Calu3 (cell line): ENCODE measurements at regions of chrX and their contacts with region 1.

Region 1: DNA sequence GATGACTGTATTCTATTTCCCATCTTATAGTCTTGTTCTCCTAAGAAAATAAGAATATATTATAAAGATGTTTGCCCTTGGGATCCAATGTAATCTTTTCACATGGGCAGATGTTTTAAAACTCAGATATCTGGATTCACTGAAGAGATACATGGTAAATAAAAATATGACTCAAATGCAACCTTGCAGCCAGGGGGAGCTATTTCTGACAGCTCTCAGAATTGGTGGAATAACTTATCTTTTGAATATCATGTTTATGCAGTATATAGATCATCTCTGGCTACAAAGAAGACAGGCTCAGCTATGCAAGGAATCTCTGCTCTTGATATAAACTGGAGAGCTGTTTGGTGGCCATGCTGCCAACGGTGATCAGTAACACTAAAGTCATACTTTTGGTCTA is 274.7 kb downstream of the GLUD2 start:
- DNase-seq: peak; percentile 17
- H3K4me3 Mint-ChIP-seq: no peak overlapping the region
- H3K27ac Mint-ChIP-seq: no peak overlapping the region
- H3K4me1 Mint-ChIP-seq: no peaks in the 10 kb centered on the region
- H3K27me3 Mint-ChIP-seq: no peaks in the 10 kb centered on the region
- CTCF ChIP-seq: peak; percentile 16

Region 2: DNA sequence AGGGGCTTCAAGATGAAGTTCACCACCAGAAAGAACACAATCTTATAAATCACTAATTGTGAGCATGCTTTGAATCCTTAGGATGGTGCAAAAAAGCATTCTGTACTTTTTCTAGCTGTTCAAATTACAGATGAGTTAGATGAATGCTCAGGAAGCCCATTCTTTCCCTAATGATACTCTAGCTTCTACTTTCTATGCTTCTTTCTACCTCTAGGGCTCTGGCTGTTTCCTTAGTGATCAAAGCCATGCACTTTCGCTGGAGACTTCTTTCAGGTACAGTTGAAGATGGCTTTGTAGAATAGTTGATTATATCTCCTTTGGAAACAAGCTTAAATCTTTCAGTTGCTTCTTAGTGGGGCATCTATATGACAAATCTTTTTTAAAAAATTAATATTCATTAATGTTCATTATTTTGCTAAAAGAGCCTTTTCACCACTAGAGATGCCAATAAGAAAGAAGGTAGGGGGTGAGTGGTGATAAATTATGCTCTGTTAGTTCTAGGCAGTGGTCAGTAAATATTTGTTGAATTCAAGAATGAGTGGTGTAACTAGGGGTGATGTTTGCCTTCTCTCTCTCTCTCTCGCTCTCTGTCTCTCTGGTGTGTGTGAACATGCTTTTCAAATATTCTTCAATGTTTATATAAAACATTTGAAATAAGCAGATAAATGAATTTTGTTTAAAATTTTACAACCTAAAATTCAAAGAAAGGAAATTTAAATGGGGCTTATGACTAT is 105.4 kb before region 1 on chrX:
- CTCF ChIA-PET with region 1: no interaction called
- intact Hi-C with region 1: no loop called
- DNase-seq: no peak
- H3K4me3 Mint-ChIP-seq: no peak overlapping the region
- H3K27ac Mint-ChIP-seq: no peak overlapping the region
- H3K4me1 Mint-ChIP-seq: no peaks in the 10 kb centered on the region
- H3K27me3 Mint-ChIP-seq: no peaks in the 10 kb centered on the region
- CTCF ChIP-seq: no peak

Region 3: DNA sequence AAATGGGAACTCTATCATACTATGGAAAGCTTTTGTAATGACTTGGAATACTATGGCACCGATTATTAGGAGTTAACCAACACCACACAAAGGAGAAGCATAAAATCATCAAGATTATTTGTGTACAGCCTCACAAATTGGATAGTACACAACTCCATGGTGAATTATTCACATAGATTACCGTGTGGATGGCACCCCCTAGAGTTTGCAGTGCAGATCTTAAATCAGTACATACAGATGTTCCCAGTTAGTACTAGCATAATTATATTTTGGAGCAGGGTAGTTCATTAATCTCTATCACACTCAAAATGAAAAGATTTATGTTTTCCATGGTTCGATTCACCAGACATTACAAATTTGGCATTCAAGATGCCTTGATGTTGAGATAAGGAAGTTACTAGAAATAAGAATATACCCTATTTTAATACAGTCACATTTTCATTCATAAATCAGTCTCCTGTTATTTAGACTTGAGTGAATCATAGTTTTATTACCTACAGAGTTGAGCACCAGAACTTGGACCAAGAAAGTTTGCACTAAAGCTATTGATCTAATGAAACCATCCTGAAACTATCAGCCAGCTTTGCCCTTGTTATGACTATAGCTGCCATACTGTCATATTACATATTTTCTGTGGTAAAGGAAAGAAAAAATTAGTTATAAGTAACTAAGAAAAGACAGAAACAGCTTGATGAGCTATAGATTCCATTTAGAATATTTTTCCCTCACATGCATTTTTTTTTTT is 257.0 kb after region 1 on chrX:
- CTCF ChIA-PET with region 1: no interaction called
- intact Hi-C with region 1: loop called (anchors 2 kb)
- DNase-seq: peak; percentile 49
- H3K4me3 Mint-ChIP-seq: no peak overlapping the region
- H3K27ac Mint-ChIP-seq: no peak overlapping the region
- H3K4me1 Mint-ChIP-seq: no peaks in the 10 kb centered on the region
- H3K27me3 Mint-ChIP-seq: no peaks in the 10 kb centered on the region
- CTCF ChIP-seq: no peak

Region 4: GRCh38 chrX:121869876-121870477 is 547.8 kb after region 1 on chrX:
- CTCF ChIA-PET with region 1: no interaction called
- intact Hi-C with region 1: no loop called
- DNase-seq: no peak
- H3K4me3 Mint-ChIP-seq: no peak overlapping the region
- H3K27ac Mint-ChIP-seq: no peak overlapping the region
- H3K4me1 Mint-ChIP-seq: no peaks in the 10 kb centered on the region
- H3K27me3 Mint-ChIP-seq: no peaks in the 10 kb centered on the region
- CTCF ChIP-seq: no peak